Activated naive CD4-positive, alpha-beta T cell treated with anti-CD3 and anti-CD28 coated beads for 36 hours (primary cell): ENCODE measurements at regions of chr3 and their contacts with region 1.

Region 1: GRCh38 chr3:126703512-126704462 is at the start of gene CHCHD6:
- DNase-seq: peak; percentile 95
- H3K4me3 Mint-ChIP-seq: peak within 1 kb of the TSS; percentile 97
- H3K27ac Mint-ChIP-seq: peak within 1 kb of the TSS; percentile 65
- H3K4me1 Mint-ChIP-seq: peaks cover 19% of the 10 kb centered on the region
- H3K27me3 Mint-ChIP-seq: peaks cover 4% of the 10 kb centered on the region
- total RNA-seq, gene CHCHD6: 17.2 to 17.7 TPM

Region 2: DNA sequence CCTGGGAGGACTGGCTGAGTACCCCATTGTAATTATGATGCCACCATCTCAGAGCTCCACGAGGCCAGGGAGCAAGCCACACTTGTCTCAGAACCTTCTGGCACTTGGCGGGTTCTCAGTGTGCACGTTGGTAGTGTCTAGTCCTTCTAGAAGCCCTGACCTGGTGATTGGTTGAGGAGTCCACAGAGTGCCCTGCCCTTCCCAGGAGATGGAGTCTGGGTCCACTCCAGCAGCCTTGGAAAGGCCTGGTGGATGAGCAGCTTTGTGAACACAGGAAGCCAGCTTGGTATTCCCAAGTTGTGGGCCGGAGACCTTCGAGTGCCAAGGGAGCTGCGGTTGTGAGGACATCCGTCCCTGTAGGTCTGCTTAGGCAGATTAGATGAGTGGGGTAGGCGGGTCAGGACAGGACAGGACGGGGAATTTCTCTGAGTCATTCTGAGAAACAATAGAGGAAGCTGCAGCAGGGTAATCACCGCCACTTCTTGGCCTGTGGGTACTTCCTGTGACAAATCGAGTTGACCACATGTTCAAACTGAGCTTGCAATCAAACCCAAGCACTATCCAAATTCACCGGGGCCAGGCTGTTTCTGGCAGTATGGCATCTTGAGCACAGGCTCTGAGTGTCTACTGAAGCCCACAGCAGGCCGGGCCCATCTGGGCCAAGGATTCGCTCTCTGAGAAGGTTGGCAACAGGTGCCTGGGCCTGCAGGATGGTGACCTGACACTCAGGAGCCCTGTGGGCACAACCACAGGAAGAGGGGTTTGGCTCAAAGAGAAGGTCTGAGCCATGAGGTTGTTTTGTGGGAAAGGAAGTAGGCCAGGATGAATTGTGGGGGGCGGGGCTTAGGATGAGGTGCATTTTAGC is 207.6 kb after region 1 on chr3:
- CTCF ChIA-PET with region 1: no interaction called
- intact Hi-C with region 1: loop called (anchors 1 kb)
- DNase-seq: peak; percentile 84
- H3K4me3 Mint-ChIP-seq: peak overlapping the region; percentile 10
- H3K27ac Mint-ChIP-seq: peak overlapping the region; percentile 82
- H3K4me1 Mint-ChIP-seq: peaks cover 26% of the 10 kb centered on the region
- H3K27me3 Mint-ChIP-seq: no peaks in the 10 kb centered on the region

Region 3: GRCh38 chr3:127915115-127915936 is 1211.5 kb after region 1 on chr3 and contains the start of gene KBTBD12:
- CTCF ChIA-PET with region 1: no interaction called
- intact Hi-C with region 1: no loop called
- DNase-seq: no peak
- H3K4me3 Mint-ChIP-seq: no peak within 1 kb of the TSS
- H3K27ac Mint-ChIP-seq: no peak within 1 kb of the TSS
- H3K4me1 Mint-ChIP-seq: peaks cover 6% of the 10 kb centered on the region
- H3K27me3 Mint-ChIP-seq: peaks cover 36% of the 10 kb centered on the region
- total RNA-seq, gene KBTBD12: not detected